ENCODE measurements at regions of chr5 and their contacts with region 1.

Region 1: DNA sequence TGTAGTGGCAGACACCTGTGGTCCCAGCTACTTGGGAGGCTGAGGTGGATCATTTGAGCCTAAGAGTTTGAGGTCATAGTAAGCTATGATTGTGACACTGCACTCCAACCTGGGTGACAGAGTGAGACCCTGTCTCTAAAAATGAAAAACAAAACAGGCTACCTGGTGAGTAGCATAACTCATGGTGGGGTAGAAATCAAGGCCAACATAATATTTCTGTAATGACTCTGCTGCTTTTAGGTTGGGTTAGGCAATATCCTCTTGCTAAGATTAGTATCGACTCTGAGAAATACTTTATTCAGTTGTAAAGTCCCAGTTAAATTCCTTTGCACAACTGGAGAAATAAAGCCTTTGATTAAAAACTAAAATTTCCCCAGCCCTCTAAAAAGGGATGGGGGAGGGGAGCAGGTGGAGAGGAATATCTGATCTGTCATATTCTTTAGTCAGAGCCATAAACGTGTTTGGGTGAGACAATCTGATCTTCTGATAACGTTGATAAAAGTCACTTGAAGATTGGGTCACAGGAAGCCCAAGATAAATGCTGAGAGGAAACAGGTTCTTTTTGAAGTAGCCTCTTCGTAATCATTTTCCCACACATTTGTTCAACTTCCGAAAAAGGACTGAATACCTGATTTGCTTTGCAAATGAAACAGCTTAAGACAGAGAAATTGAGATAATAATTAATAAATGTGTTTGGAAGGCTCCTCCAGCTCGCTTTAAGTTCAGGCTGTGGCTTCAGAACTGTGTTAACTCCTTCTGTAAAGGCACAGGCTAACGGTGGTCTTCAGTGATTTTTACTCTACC is 14.9 kb downstream of the IL4 start:
- DNase-seq: peak; percentile 69
- H3K4me3 Mint-ChIP-seq: peak overlapping the region; percentile 25
- H3K27ac Mint-ChIP-seq: peak overlapping the region; percentile 81
- H3K4me1 Mint-ChIP-seq: peaks cover 32% of the 10 kb centered on the region
- H3K27me3 Mint-ChIP-seq: no peaks in the 10 kb centered on the region

Region 2: GRCh38 chr5:132662925-132663770 is 25.6 kb before region 1 on chr5:
- intact Hi-C with region 1: loop called (anchors 2 kb)
- DNase-seq: peak; percentile 81
- H3K4me3 Mint-ChIP-seq: peak overlapping the region; percentile 67
- H3K27ac Mint-ChIP-seq: peak overlapping the region; percentile 85
- H3K4me1 Mint-ChIP-seq: peaks cover 66% of the 10 kb centered on the region
- H3K27me3 Mint-ChIP-seq: no peaks in the 10 kb centered on the region

Region 3: DNA sequence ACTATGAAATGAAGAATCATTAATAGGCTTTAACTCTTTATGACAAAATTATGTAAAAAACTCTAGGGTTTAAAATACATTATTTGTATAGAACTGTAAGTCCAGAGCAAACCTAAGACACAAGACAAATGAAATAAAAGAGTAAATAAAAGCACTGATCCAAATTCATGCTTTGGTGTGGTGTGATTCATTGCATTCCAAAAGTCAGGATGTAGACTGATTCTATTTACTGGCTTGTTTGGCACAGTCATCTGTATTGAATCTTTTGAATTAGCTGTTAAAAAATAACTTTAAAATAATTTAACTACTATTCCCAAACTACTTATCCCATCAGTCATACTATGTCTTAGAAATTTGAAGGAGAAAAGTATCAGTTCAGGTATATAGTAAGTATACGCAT is 16.1 kb after region 1 on chr5:
- intact Hi-C with region 1: loop called (anchors 2 kb)
- DNase-seq: no peak
- H3K4me3 Mint-ChIP-seq: no peak overlapping the region
- H3K27ac Mint-ChIP-seq: no peak overlapping the region
- H3K4me1 Mint-ChIP-seq: peaks cover 23% of the 10 kb centered on the region
- H3K27me3 Mint-ChIP-seq: no peaks in the 10 kb centered on the region

Region 4: GRCh38 chr5:132753135-132753987 is 64.6 kb after region 1 on chr5:
- intact Hi-C with region 1: loop called (anchors 2 kb)
- DNase-seq: peak; percentile 74
- H3K4me3 Mint-ChIP-seq: no peak overlapping the region
- H3K27ac Mint-ChIP-seq: peak overlapping the region; percentile 82
- H3K4me1 Mint-ChIP-seq: peaks cover 57% of the 10 kb centered on the region
- H3K27me3 Mint-ChIP-seq: no peaks in the 10 kb centered on the region

Measured in activated CD4-positive, alpha-beta T cell treated with anti-CD3 and anti-CD28 coated beads, Interleukin-2, amount 10 ng/mL, durations not matched to agents 24 days and 14 days (primary cell).